Heart right ventricle (tissue), 16 donors: ENCODE measurements at regions of chr6 and their contacts with region 1.

Region 1: GRCh38 chr6:137415127-137415833 is 78.9 kb downstream of the OLIG3 start:
- DNase-seq: peak; percentile 19 to 57
- ATAC-seq: peak; percentile 74 to 92 (median 88)
- H3K4me3 ChIP-seq: peak overlapping the region; percentile 11 to 59 (median 48)
- H3K27ac ChIP-seq: peak overlapping the region in 9 of 10 donors; percentile 12 to 72 (median 61)
- H3K4me1 ChIP-seq: peaks cover 0 to 21% (median 5%) of the 10 kb centered on the region in 9 donors
- H3K27me3 ChIP-seq: peaks cover 0 to 37% (median 18%) of the 10 kb centered on the region in 7 donors
- CTCF ChIP-seq: peak; percentile 18 to 77 (median 62)

Region 2: GRCh38 chr6:137076277-137077068 is 338.8 kb before region 1 on chr6:
- intact Hi-C with region 1: loop called in 2 of 10 experiments (anchors 5 to 10 kb)
- DNase-seq: peak; percentile 54 to 69
- ATAC-seq: peak; percentile 83 to 100 (median 96)
- H3K4me3 ChIP-seq: no peak overlapping the region
- H3K27ac ChIP-seq: no peak overlapping the region
- H3K4me1 ChIP-seq: no peaks in the 10 kb centered on the region
- H3K27me3 ChIP-seq: peaks cover 0 to 5% (median 0%) of the 10 kb centered on the region in 7 donors
- CTCF ChIP-seq: peak; percentile 48 to 82 (median 74)

Region 3: DNA sequence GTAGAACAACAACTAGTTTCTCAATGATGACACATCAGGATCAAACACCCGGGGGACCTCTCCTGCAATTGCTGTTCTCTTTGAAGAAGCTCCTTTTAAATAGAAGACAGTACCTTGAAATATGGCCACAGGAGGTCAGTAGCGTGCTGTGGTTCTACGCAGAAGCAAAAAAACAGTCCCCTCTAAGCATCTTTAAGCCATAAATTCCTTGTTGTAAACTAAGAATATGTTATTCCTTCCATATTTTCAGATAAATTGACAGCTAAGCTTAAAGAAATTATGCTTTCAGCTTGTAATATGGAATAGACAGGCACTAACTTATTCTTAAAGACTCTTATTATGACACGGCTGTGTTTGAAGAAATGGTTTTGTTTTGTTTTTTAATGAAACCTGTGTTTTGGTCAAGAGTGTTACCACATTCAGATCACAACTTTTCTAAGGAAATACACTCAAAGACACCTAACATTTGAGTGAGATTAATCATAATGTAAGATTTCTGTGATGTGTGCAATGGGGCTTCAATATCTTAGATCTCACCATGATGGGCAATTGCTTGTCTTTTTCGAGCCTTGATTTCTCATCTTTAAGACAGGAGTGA is 320.8 kb before region 1 on chr6:
- intact Hi-C with region 1: loop called in 8 of 10 experiments (anchors 10 kb)
- DNase-seq: peak in 1 of 2 donors; percentile 70
- ATAC-seq: peak in 7 of 8 donors; percentile 63 to 79 (median 74)
- H3K4me3 ChIP-seq: no peak overlapping the region
- H3K27ac ChIP-seq: no peak overlapping the region
- H3K4me1 ChIP-seq: peaks cover 0 to 15% (median 0%) of the 10 kb centered on the region in 9 donors
- H3K27me3 ChIP-seq: no peaks in the 10 kb centered on the region
- CTCF ChIP-seq: peak; percentile 58 to 90 (median 80)

Region 4: DNA sequence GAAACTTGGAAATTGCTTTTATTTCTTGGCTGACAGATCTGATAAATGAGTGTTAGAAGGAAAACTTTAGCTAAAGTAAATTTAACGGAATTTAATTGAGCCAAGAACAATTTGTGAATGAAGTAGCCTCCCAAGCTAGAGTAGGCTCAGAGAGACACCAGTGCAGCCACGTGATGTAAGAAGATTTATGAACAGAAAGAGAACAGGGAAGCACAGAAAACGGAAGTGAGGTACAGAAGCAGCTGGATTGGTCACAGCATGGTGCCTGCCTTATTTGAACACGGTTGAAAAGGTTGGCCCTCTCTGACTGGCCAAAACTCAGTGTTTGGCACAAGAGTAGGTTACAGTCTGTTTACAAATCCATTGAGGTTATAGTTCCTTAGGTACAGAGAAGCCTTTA is 166.6 kb before region 1 on chr6:
- intact Hi-C with region 1: no loop called
- DNase-seq: no peak
- ATAC-seq: peak in 4 of 8 donors; percentile 52 to 80 (median 64)
- H3K4me3 ChIP-seq: no peak overlapping the region
- H3K27ac ChIP-seq: peak overlapping the region in 2 of 10 donors; percentile 15 to 59
- H3K4me1 ChIP-seq: peaks cover 0 to 30% (median 0%) of the 10 kb centered on the region in 9 donors
- H3K27me3 ChIP-seq: no peaks in the 10 kb centered on the region
- CTCF ChIP-seq: no peak

Region 5: GRCh38 chr6:137271245-137272183 is 143.8 kb before region 1 on chr6:
- intact Hi-C with region 1: loop called in 8 of 10 experiments (anchors 1 to 10 kb)
- DNase-seq: no peak
- ATAC-seq: peak in 7 of 8 donors; percentile 63 to 82 (median 73)
- H3K4me3 ChIP-seq: no peak overlapping the region
- H3K27ac ChIP-seq: no peak overlapping the region
- H3K4me1 ChIP-seq: peaks cover 0 to 14% (median 0%) of the 10 kb centered on the region in 9 donors
- H3K27me3 ChIP-seq: no peaks in the 10 kb centered on the region
- CTCF ChIP-seq: peak; percentile 76 to 97 (median 93)

Region 6: DNA sequence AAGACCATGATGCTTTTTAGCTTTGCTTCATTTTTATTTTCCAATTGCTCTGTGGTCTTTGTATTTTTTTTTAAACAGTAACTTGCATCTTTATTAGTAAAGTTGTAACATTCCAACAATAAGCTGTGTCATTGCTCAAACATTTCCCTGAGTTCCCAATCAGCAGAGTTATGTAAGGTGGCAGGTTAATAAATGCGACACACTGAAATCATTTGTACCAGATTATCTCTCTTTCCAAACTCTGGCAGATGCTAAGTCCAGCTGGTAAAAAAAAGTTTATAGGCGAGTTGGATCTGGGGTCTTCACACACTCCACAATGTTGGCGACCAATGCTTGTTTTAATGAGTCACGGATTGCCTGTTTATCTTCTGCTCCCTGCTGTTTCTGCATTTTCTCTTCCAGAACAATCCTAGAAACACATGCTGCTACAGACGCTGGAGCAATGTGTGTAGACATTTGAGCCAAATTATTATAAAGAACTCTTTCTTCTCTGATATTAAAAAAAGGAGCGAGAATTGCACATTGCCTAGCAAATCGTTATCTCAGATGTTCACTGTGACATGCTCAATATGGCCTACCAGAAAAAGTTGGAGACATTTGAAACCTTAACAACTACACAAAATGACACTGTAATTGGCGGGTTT is 82.5 kb before region 1 on chr6:
- intact Hi-C with region 1: loop called in 1 of 10 experiments (anchors 10 kb)
- DNase-seq: peak in 1 of 2 donors; percentile 19
- ATAC-seq: peak in 7 of 8 donors; percentile 76 to 92 (median 88)
- H3K4me3 ChIP-seq: no peak overlapping the region
- H3K27ac ChIP-seq: peak overlapping the region in 1 of 10 donors; percentile 34
- H3K4me1 ChIP-seq: peaks cover 0 to 11% (median 0%) of the 10 kb centered on the region in 9 donors
- H3K27me3 ChIP-seq: peaks cover 0 to 3% (median 0%) of the 10 kb centered on the region in 7 donors
- CTCF ChIP-seq: no peak